Adrenal gland (tissue), 19 donors: ENCODE measurements at regions of chr10 and their contacts with region 1.

Region 1: DNA sequence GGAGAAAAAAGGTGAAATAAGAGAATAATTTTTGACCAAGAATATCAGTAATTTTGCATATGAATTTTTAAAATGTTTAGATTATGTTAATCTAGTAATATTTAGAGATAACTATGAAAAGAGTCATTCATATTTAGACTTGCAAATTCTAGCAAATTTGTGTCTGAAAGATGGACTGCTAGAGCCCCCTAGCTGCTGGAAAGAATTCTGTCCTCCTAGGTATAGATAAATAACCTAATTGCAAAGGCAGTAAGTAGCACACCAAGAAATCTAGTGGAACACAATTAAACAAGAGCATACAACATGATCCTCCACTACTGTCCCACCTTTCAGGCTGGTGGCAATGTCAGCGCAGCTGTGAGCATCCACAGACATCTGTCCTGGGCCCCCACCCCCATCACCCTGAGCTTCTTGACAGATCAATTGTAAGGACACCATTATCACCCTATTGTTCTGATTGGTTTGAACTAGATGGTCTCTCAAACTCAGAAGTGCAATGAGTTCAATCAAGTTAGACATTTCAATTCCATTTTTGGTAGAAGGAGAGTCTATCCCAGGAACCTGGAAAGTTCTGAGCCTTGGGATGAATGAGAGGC is 15.0 kb upstream of the GFRA1 start:
- DNase-seq: peak; percentile 31 to 75 (median 45)
- H3K4me3 ChIP-seq: no peak overlapping the region
- H3K27ac ChIP-seq: no peak overlapping the region
- H3K4me1 ChIP-seq: no peaks in the 10 kb centered on the region
- H3K27me3 ChIP-seq: peaks cover 2% of the 10 kb centered on the region
- CTCF ChIP-seq: peak; percentile 64 to 87 (median 77)
- POLR2A ChIP-seq: no peak

Region 2: GRCh38 chr10:115141254-115141653 is 1146.8 kb before region 1 on chr10:
- intact Hi-C with region 1: loop called in 1 of 2 experiments (anchors 10 kb)
- DNase-seq: no peak
- H3K4me3 ChIP-seq: no peak overlapping the region
- H3K27ac ChIP-seq: no peak overlapping the region
- H3K4me1 ChIP-seq: no peaks in the 10 kb centered on the region
- H3K27me3 ChIP-seq: no peaks in the 10 kb centered on the region
- CTCF ChIP-seq: peak; percentile 19 to 51 (median 40)
- POLR2A ChIP-seq: no peak

Region 3: DNA sequence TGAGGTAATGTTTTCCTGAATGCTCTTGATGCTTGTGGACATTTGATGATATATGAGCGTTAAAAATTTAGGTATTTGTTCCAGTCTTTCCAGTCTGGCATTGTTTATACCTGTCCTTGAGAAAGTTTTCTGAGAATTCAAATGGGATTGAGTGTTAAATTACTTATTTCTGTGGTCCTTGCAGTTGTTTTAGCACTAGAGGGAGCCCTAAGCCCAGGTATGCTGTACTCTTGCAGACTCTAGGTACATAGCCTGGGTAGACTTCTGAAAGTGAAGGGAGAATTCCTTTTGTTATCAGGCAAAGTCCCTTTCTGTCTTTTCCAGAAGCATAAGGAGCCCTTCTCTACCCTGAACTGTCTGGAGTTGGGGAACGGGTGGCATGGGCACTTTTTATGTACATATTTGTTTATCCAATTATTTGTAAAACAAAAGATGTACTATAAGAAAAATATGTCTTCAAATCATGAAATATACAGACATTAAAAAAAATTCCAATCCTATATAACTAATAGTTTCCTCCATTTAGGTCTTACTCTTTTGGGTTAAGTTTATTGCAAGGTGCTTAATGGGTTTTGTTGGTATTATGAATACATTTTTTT is 932.7 kb before region 1 on chr10:
- intact Hi-C with region 1: loop called in 1 of 2 experiments (anchors 10 kb)
- DNase-seq: peak; percentile 22 to 68 (median 61)
- H3K4me3 ChIP-seq: no peak overlapping the region
- H3K27ac ChIP-seq: no peak overlapping the region
- H3K4me1 ChIP-seq: no peaks in the 10 kb centered on the region
- H3K27me3 ChIP-seq: no peaks in the 10 kb centered on the region
- CTCF ChIP-seq: peak; percentile 40 to 75 (median 71)
- POLR2A ChIP-seq: no peak

Region 4: GRCh38 chr10:115706026-115706781 is 581.8 kb before region 1 on chr10:
- intact Hi-C with region 1: loop called in 1 of 2 experiments (anchors 10 kb)
- DNase-seq: peak in 1 of 7 donors; percentile 6
- H3K4me3 ChIP-seq: no peak overlapping the region
- H3K27ac ChIP-seq: no peak overlapping the region
- H3K4me1 ChIP-seq: no peaks in the 10 kb centered on the region
- H3K27me3 ChIP-seq: no peaks in the 10 kb centered on the region
- CTCF ChIP-seq: peak; percentile 40 to 74 (median 58)
- POLR2A ChIP-seq: no peak

Region 5: DNA sequence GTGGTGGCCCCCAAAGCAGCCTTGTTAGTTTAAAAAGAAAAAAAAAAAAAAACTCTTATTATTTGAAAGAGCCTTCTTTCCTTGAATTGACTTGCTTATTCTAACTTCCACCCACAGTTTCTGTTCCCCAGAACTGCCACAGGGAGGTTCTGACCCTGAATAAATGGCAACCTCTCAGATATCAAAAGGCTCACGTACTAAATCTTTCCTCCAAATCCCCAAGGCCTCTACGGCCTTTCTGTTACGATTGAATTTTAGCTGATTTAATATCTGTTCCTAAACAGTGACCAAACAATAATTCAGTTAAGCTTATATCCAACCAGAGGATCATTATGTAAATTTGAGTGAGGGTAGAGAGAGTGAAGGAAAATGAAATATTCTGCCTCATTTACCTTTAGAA is 497.8 kb before region 1 on chr10:
- intact Hi-C with region 1: loop called (anchors 5 to 10 kb)
- DNase-seq: peak in 2 of 7 donors; percentile 24 to 27
- H3K4me3 ChIP-seq: no peak overlapping the region
- H3K27ac ChIP-seq: peak overlapping the region in 1 of 5 donors; percentile 2
- H3K4me1 ChIP-seq: peaks cover 3 to 15% of the 10 kb centered on the region in 2 donors
- H3K27me3 ChIP-seq: no peaks in the 10 kb centered on the region
- CTCF ChIP-seq: peak in 3 of 6 experiments; percentile 15 to 37 (median 27)
- POLR2A ChIP-seq: no peak

Region 6: GRCh38 chr10:115795964-115796363 is 492.0 kb before region 1 on chr10:
- intact Hi-C with region 1: loop called (anchors 5 to 10 kb)
- DNase-seq: no peak
- H3K4me3 ChIP-seq: no peak overlapping the region
- H3K27ac ChIP-seq: peak overlapping the region in 1 of 5 donors; percentile 19
- H3K4me1 ChIP-seq: peaks cover 4 to 8% of the 10 kb centered on the region in 2 donors
- H3K27me3 ChIP-seq: no peaks in the 10 kb centered on the region
- CTCF ChIP-seq: no peak
- POLR2A ChIP-seq: no peak

Region 7: DNA sequence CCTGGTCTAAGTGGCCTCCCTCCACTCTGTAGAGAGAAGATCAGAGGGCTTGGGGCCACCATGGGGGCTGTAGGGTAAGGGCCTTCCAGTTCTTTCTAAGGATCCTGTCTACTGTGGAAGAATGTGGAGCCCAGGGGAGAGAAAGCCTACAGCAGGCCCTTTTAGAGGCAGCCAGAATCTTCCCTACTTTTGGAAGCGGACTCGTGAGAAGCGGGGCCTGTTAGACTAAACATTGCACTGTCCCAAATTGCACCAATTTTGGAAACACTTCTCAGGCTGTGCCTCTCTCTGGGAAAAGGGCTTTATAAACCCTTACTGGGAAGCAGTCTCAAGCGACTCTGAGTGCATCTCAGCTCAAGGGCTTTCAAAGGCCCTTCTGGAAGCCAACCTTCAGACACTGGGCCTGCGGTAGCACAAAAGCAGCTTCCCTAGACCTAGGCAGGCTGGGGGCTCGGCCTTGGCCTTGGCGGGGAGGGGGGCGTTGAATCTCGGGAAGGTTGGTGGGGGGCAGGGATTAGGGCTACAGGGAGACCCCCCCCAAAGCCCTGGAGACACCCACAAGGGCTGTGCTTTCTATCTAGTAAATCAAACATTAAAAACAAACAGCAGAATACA is 313.1 kb before region 1 on chr10:
- intact Hi-C with region 1: no loop called
- DNase-seq: no peak
- H3K4me3 ChIP-seq: no peak overlapping the region
- H3K27ac ChIP-seq: no peak overlapping the region
- H3K4me1 ChIP-seq: no peaks in the 10 kb centered on the region
- H3K27me3 ChIP-seq: no peaks in the 10 kb centered on the region
- CTCF ChIP-seq: no peak
- POLR2A ChIP-seq: no peak